Tibial artery (tissue), 4 donors: ENCODE measurements at regions of chr11 and their contacts with region 1.

Region 1: GRCh38 chr11:124953753-124954589 is at the start of gene CCDC15:
- DNase-seq: peak; percentile 98
- H3K4me3 ChIP-seq: peak within 1 kb of the TSS; percentile 56 to 69
- H3K27ac ChIP-seq: peak within 1 kb of the TSS; percentile 70 to 76
- H3K4me1 ChIP-seq: peaks cover 0 to 14% (median 5%) of the 10 kb centered on the region in 4 donors
- H3K27me3 ChIP-seq: no peaks in the 10 kb centered on the region
- CTCF ChIP-seq: no peak

Region 2: GRCh38 chr11:124855437-124855836 is 98.5 kb before region 1 on chr11:
- intact Hi-C with region 1: no loop called
- DNase-seq: no peak
- H3K4me3 ChIP-seq: no peak overlapping the region
- H3K27ac ChIP-seq: no peak overlapping the region
- H3K4me1 ChIP-seq: no peaks in the 10 kb centered on the region
- H3K27me3 ChIP-seq: peaks cover 0 to 45% of the 10 kb centered on the region in 2 donors
- CTCF ChIP-seq: no peak

Region 3: DNA sequence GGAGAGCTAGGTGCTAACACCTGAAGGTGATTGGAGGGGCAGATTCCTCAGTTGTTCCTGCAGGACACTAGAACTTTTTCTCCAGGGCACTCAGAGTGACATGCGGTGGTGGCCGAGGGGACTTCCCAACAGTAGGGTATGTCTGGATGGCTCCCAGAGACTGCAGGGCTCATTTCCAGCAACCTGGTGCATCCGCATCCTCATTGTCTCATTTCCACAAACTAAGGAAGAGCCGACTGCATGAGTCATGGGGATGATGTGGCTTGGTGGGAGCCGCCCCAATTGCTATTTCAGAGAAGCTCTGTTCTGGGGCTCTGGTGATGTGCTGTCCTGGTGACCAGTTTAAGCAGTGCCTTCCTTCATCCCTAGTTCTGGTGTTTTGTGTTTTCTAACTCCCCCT is 53.5 kb before region 1 on chr11:
- intact Hi-C with region 1: no loop called
- DNase-seq: peak in 1 of 2 donors; percentile 46
- H3K4me3 ChIP-seq: no peak overlapping the region
- H3K27ac ChIP-seq: no peak overlapping the region
- H3K4me1 ChIP-seq: peaks cover 0 to 5% (median 2%) of the 10 kb centered on the region in 4 donors
- H3K27me3 ChIP-seq: no peaks in the 10 kb centered on the region
- CTCF ChIP-seq: no peak

Region 4: GRCh38 chr11:125141686-125142535 is 187.9 kb after region 1 on chr11:
- intact Hi-C with region 1: loop called (anchors 10 kb)
- DNase-seq: no peak
- H3K4me3 ChIP-seq: no peak overlapping the region
- H3K27ac ChIP-seq: no peak overlapping the region
- H3K4me1 ChIP-seq: no peaks in the 10 kb centered on the region
- H3K27me3 ChIP-seq: peaks cover 0 to 26% of the 10 kb centered on the region in 2 donors
- CTCF ChIP-seq: peak; percentile 80 to 94

Region 5: GRCh38 chr11:125358254-125358840 is 404.4 kb after region 1 on chr11:
- intact Hi-C with region 1: loop called (anchors 10 kb)
- DNase-seq: no peak
- H3K4me3 ChIP-seq: no peak overlapping the region
- H3K27ac ChIP-seq: no peak overlapping the region
- H3K4me1 ChIP-seq: no peaks in the 10 kb centered on the region
- H3K27me3 ChIP-seq: no peaks in the 10 kb centered on the region
- CTCF ChIP-seq: no peak